ENCODE measurements at regions of chr15 and their contacts with region 1.

Region 1: GRCh38 chr15:20340931-20341661 is 200.5 kb downstream of the GOLGA6L6 start:
- DNase-seq: peak; percentile 74 to 81
- ATAC-seq: peak in 7 of 8 donors; percentile 37 to 58 (median 43)
- H3K4me3 ChIP-seq: no peak overlapping the region
- H3K27ac ChIP-seq: no peak overlapping the region
- H3K4me1 ChIP-seq: no peaks in the 10 kb centered on the region
- H3K27me3 ChIP-seq: peaks cover 0 to 6% (median 0%) of the 10 kb centered on the region in 7 donors
- CTCF ChIP-seq: no peak

Region 2: GRCh38 chr15:20294651-20295237 is 46.4 kb before region 1 on chr15:
- intact Hi-C with region 1: loop called in 1 of 10 experiments (anchors 5 kb)
- DNase-seq: no peak
- ATAC-seq: no peak
- H3K4me3 ChIP-seq: no peak overlapping the region
- H3K27ac ChIP-seq: no peak overlapping the region
- H3K4me1 ChIP-seq: no peaks in the 10 kb centered on the region
- H3K27me3 ChIP-seq: peaks cover 0 to 36% (median 8%) of the 10 kb centered on the region in 7 donors
- CTCF ChIP-seq: no peak

Region 3: GRCh38 chr15:20409247-20409646 is 68.2 kb after region 1 on chr15:
- intact Hi-C with region 1: no loop called
- DNase-seq: no peak
- ATAC-seq: peak in 1 of 8 donors; percentile 27
- H3K4me3 ChIP-seq: no peak overlapping the region
- H3K27ac ChIP-seq: no peak overlapping the region
- H3K4me1 ChIP-seq: no peaks in the 10 kb centered on the region
- H3K27me3 ChIP-seq: no peaks in the 10 kb centered on the region
- CTCF ChIP-seq: no peak

Region 4: DNA sequence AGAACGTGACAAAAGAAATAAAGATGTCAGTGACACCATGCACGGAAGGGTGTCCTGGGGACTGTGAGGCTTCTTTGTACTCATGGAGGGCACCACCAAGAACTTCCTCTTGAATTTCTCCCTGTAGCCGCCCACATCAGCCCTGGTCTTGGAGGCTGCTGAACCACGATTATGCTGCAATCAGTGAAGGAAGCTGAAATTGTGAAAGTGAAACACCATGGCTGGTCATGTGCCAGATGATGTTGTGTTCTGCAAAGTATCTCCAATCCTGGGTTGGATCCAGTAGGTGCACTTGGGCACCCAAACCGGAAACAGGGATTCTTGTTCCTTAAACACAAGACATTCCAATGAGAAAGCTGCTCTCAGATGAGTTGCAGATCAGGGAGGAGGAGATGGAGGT is 304.9 kb after region 1 on chr15:
- intact Hi-C with region 1: no loop called
- DNase-seq: peak in 1 of 2 donors; percentile 32
- ATAC-seq: peak in 4 of 8 donors; percentile 15 to 47 (median 42)
- H3K4me3 ChIP-seq: no peak overlapping the region
- H3K27ac ChIP-seq: no peak overlapping the region
- H3K4me1 ChIP-seq: peaks cover 0 to 5% (median 0%) of the 10 kb centered on the region in 9 donors
- H3K27me3 ChIP-seq: peaks cover 6 to 32% (median 23%) of the 10 kb centered on the region in 7 donors
- CTCF ChIP-seq: no peak

Region 5: GRCh38 chr15:22240951-22241350 is 1899.9 kb after region 1 on chr15:
- intact Hi-C with region 1: loop called in 1 of 10 experiments (anchors 10 kb)
- DNase-seq: no peak
- ATAC-seq: no peak
- H3K4me3 ChIP-seq: no peak overlapping the region
- H3K27ac ChIP-seq: no peak overlapping the region
- H3K4me1 ChIP-seq: no peaks in the 10 kb centered on the region
- H3K27me3 ChIP-seq: peaks cover 0 to 18% (median 3%) of the 10 kb centered on the region in 7 donors
- CTCF ChIP-seq: no peak